ENCODE measurements at regions of chr2 and their contacts with region 1.

Region 1: DNA sequence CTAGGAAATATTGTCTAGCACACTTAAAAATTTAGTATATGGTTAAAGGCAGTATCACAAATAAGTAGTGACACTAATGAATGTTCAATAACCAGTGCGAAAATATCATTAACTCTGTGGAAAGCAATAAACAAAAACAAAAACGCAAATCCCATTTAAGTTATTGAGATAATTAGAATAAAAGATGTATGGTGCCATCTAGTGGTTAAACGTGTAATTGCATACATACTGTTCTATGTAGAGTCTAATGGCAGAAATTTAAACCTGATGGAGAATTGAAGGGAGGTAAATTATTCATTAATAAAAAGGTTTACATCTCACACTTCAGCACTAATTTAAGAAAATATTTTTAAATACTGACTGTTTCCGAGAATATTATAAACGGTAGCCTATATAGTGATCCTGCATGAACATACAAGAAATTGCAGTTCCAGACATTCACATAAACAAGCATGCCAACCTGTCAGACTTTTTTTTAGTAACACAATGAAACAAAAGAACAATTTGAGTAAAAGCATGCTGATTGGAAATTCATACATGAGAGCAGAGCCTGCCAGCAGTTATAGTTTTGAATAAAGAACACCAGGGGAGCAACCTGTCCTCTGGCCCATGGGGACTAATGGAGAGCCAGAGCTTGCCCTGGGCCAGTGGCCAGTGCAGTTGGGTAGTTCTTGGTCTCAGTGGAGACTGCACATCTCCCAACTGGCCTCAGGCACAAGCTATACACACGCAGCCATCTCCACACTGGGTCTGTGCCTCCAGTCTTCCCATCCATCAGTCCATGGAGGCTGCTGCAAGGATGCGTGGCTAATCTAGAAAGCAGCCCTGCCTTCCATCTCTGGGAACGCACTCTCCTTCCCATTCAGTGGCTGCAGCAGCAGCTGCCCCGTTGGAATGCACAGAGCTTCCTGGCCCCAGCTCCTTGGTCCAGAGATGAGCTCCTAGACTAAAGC is 28.0 kb downstream of the GCG start:
- DNase-seq: no peak
- H3K4me3 ChIP-seq: no peak overlapping the region
- CTCF ChIP-seq: peak; percentile 49

Region 2: DNA sequence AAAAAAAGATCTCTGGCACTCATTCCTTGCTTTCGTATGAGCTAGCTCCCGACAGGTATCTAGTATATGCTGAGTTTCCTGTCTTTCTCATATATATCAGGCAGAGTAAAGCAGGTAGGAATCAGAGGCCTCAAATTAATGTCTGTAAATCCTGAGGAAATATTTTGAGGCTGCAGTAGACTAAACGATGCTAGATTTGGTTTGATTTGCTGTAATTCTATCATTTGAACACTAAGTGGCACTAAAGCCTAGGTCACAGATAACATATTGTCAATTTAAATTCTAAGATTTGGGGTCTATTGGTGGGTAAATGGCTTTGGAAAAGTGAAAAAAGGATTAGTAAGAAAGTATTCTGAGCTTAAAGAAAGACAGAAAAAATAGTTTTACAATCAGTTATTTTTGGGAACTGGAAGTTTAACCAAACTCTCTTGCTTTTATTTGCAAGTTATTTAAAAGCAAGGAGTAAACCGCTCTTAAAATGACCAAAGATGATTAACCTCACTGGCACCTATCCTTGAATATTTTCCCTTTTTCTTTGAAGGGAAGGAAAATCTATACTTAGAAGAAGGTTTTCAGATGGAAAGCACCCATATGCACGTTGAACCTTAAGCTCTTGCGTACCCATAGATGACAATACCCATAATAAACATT is 537.4 kb before region 1 on chr2:
- CTCF ChIA-PET with region 1: interaction called, 20 read pairs
- POLR2A ChIA-PET with region 1: no interaction called
- DNase-seq: no peak
- H3K4me3 ChIP-seq: no peak overlapping the region
- CTCF ChIP-seq: peak; percentile 41

Region 3: DNA sequence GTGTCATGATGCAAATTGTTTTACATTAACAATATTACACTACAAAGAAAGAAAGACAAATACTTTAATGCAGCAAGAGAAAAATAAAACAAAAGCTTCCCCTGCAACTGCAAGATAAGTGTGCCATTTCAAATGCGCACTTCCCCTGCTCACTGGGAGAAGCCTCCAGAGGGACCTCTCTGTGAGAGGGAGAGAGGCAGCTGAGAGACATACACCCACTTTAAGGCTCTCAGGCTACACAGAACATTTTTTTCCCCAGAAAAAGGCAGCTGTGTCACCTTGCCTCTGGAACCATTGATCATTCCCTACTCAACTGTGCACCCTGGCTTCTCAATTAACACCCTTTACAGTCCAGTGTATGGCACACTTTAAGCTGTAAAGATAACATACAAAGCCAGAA is 125.2 kb before region 1 on chr2:
- CTCF ChIA-PET with region 1: interaction called, 76 read pairs
- POLR2A ChIA-PET with region 1: no interaction called
- DNase-seq: no peak
- H3K4me3 ChIP-seq: no peak overlapping the region
- CTCF ChIP-seq: no peak

Region 4: GRCh38 chr2:162007447-162008040 is 116.5 kb before region 1 on chr2:
- CTCF ChIA-PET with region 1: interaction called, 76 read pairs
- POLR2A ChIA-PET with region 1: no interaction called
- DNase-seq: no peak
- H3K4me3 ChIP-seq: no peak overlapping the region
- CTCF ChIP-seq: peak; percentile 5

Region 5: GRCh38 chr2:162018530-162018929 is 105.6 kb before region 1 on chr2:
- CTCF ChIA-PET with region 1: interaction called, 15 read pairs
- POLR2A ChIA-PET with region 1: no interaction called
- DNase-seq: no peak
- H3K4me3 ChIP-seq: no peak overlapping the region
- CTCF ChIP-seq: no peak

Region 6: DNA sequence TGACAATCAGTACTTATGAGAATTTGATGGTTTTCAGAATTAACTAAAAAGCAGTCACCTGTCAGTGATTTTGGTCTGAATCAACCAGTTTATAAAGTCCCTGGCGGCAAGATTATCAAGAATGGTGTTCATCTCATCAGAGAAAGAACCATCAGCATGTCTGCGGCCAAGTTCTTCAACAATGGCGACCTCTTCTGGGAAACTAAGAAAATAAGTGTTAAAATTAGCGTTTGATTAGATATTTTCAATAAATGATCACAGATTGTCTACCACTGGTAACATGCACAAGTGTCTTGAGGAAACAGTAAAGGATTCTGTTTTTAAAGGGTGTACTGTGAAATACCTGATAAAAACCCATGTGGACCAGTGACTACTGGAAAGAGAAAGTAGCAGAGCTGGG is 19.9 kb after region 1 on chr2:
- CTCF ChIA-PET with region 1: interaction called, 26 read pairs
- POLR2A ChIA-PET with region 1: no interaction called
- DNase-seq: no peak
- H3K4me3 ChIP-seq: no peak overlapping the region
- CTCF ChIP-seq: no peak

Region 7: GRCh38 chr2:162153608-162154224 is 29.6 kb after region 1 on chr2:
- CTCF ChIA-PET with region 1: interaction called, 23 read pairs
- POLR2A ChIA-PET with region 1: no interaction called
- DNase-seq: no peak
- H3K4me3 ChIP-seq: no peak overlapping the region
- CTCF ChIP-seq: peak; percentile 70